A549 (cell line): ENCODE measurements at regions of chr19 and their contacts with region 1.

Region 1: DNA sequence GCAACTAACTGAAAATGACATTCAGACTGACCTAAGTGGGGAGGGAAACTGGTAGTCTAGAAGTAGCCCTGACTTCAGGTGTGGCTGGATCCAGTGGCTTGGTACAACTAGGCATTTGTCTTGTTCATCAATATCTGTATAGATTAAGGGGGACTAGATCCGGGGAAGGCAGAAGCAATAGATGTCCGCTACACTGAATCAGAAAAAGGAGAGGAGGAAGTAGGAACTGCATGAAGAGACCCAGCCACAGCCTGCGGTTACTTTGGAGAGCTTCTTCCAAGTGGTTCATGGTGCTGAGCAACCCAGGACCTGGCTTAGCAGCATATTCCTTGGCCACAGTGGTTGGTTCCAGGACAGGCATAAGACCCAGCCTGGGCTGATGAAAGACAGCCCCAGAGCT is 9.9 kb upstream of the PRODH2 start:
- DNase-seq: peak in 1 of 2 experiments; percentile 29
- ATAC-seq: peak; percentile 48 to 60; a peak in 4 of 6 replicates
- H3K4me3 ChIP-seq: no peak overlapping the region
- H3K27ac ChIP-seq: no peak overlapping the region
- H3K4me1 ChIP-seq: no peaks in the 10 kb centered on the region
- CTCF ChIP-seq: no peak
- EP300 ChIP-seq: no peak
- POLR2A ChIP-seq: no peak
- RAD21 ChIP-seq: no peak

Region 2: DNA sequence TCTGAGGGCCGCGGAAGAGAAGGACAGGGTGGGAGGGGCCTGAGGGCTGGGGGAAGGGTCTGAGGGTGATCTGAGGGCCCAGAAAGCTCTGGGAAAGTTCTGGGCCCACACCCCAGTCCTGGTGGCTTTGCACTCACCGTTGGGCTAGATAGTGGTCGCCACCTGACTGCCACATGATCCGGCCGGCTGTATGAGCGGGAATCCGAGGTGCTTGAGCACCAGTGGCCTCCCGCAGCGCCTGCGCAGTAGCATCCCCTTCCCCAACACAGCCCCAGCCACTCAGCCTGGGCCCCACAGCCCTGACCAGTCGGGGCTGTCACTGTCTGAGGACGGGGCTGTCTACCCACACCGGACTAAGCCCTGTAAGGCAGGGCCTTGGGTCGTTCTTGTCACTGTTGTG is 24.9 kb before region 1 on chr19:
- CTCF ChIA-PET with region 1: interaction called, 12 read pairs
- POLR2A ChIA-PET with region 1: no interaction called
- DNase-seq: no peak
- ATAC-seq: peak; percentile 16 to 40; a peak in 5 of 6 replicates
- H3K4me3 ChIP-seq: no peak overlapping the region
- H3K27ac ChIP-seq: no peak overlapping the region
- H3K4me1 ChIP-seq: peaks cover 8% of the 10 kb centered on the region
- CTCF ChIP-seq: no peak
- EP300 ChIP-seq: no peak
- POLR2A ChIP-seq: no peak
- RAD21 ChIP-seq: no peak

Region 3: GRCh38 chr19:35807633-35808032 is 14.9 kb before region 1 on chr19:
- CTCF ChIA-PET with region 1: interaction called, 16 read pairs
- POLR2A ChIA-PET with region 1: no interaction called
- DNase-seq: no peak
- ATAC-seq: no peak
- H3K4me3 ChIP-seq: no peak overlapping the region
- H3K27ac ChIP-seq: no peak overlapping the region
- H3K4me1 ChIP-seq: peaks cover 10% of the 10 kb centered on the region
- CTCF ChIP-seq: no peak
- EP300 ChIP-seq: no peak
- POLR2A ChIP-seq: no peak
- RAD21 ChIP-seq: no peak

Region 4: DNA sequence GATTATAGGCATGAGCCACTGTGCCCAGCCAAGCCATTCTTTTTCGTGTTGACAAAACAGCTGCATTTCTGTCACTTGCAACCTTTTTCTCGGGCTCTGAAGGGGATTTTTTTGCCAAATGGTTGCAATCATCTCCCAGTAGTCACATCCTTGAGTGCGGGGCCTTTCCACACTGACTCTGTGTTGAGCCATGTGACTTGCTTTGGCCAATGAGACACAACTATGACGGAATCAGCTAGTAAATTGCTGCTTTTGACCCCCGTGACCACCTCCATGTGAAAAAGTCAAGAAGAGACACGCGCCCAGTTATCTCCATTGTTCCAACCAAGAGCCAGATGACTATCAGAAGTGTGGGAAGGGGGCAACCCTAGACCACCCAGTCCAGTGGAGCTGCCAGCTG is 11.4 kb after region 1 on chr19:
- CTCF ChIA-PET with region 1: interaction called, 32 read pairs
- POLR2A ChIA-PET with region 1: interaction called, 3 read pairs
- DNase-seq: no peak
- ATAC-seq: no peak
- H3K4me3 ChIP-seq: no peak overlapping the region
- H3K27ac ChIP-seq: no peak overlapping the region
- H3K4me1 ChIP-seq: no peaks in the 10 kb centered on the region
- CTCF ChIP-seq: no peak
- EP300 ChIP-seq: no peak
- POLR2A ChIP-seq: 0 out of 2 replicates have a peak, but pooled peaks have one; percentile 13
- RAD21 ChIP-seq: no peak